ENCODE measurements at regions of chr13 and their contacts with region 1.

Region 1: GRCh38 chr13:100573121-100573520 is 15.5 kb downstream of the GGACT start:
- DNase-seq: peak; percentile 78
- H3K4me3 ChIP-seq: no peak overlapping the region
- H3K27ac ChIP-seq: no peak overlapping the region
- H3K4me1 ChIP-seq: no peaks in the 10 kb centered on the region
- H3K27me3 ChIP-seq: no peaks in the 10 kb centered on the region
- CTCF ChIP-seq: peak; percentile 60 to 76 (median 68)
- EP300 ChIP-seq: no peak
- POLR2A ChIP-seq: no peak

Region 2: GRCh38 chr13:100356889-100357288 is 216.2 kb before region 1 on chr13:
- in situ Hi-C with region 1: no loop called
- intact Hi-C with region 1: no loop called
- DNase-seq: no peak
- H3K4me3 ChIP-seq: no peak overlapping the region
- H3K27ac ChIP-seq: no peak overlapping the region
- H3K4me1 ChIP-seq: no peaks in the 10 kb centered on the region
- H3K27me3 ChIP-seq: no peaks in the 10 kb centered on the region
- CTCF ChIP-seq: no peak
- EP300 ChIP-seq: no peak
- POLR2A ChIP-seq: no peak

Region 3: DNA sequence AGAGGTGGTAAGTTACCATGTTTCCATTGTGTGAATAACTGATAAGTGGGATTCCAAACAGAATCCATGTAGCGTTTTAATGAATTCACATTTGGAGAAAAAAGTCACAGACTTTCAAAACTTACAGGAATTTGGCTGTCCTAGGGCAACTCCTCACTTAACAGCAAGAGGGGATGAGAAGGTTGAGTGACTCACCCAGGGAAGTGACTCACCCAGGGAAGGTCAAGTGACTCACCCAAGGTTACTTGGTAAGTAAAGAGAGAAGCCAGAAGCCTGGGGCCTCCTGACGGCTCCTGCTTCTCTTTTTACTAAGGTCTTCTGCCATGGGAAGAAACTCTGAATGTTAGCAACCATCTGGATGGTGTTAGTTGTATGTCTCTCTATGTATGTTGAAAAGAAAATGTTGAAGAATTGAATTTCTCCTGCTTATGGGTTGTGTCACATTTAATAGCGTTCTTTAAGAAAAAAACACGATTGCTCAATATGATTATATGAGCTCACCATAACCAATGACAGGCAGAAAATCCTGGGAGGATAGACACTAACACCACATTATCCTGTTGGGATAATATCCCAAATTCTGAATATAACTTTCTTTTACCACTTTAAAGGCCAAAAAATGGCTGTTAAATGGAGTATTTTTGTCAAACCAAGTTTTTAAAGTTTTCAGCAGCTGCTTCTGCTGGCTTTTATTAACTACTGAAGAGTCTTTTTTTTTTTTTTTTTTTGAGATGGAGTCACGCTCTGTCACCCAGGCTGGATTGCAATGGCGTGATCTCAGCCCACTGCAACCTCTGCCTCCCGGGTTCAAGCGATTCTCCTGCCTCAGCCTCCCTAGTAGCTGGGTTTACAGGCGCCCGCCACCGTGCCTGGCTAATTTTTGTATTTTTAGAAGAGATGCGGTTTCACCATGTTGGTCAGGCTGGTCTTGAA is 180.1 kb before region 1 on chr13:
- in situ Hi-C with region 1: no loop called
- intact Hi-C with region 1: no loop called
- DNase-seq: peak; percentile 75
- H3K4me3 ChIP-seq: no peak overlapping the region
- H3K27ac ChIP-seq: peak overlapping the region; percentile 46 to 65 (median 58)
- H3K4me1 ChIP-seq: peaks cover 0 to 35% (median 0%) of the 10 kb centered on the region in 4 donors
- H3K27me3 ChIP-seq: no peaks in the 10 kb centered on the region
- CTCF ChIP-seq: no peak
- EP300 ChIP-seq: no peak
- POLR2A ChIP-seq: no peak

Region 4: GRCh38 chr13:100650326-100650725 is 77.2 kb after region 1 on chr13:
- in situ Hi-C with region 1: no loop called
- intact Hi-C with region 1: no loop called
- DNase-seq: no peak
- H3K4me3 ChIP-seq: no peak overlapping the region
- H3K27ac ChIP-seq: no peak overlapping the region
- H3K4me1 ChIP-seq: no peaks in the 10 kb centered on the region
- H3K27me3 ChIP-seq: no peaks in the 10 kb centered on the region
- CTCF ChIP-seq: no peak
- EP300 ChIP-seq: no peak
- POLR2A ChIP-seq: no peak

Region 5: DNA sequence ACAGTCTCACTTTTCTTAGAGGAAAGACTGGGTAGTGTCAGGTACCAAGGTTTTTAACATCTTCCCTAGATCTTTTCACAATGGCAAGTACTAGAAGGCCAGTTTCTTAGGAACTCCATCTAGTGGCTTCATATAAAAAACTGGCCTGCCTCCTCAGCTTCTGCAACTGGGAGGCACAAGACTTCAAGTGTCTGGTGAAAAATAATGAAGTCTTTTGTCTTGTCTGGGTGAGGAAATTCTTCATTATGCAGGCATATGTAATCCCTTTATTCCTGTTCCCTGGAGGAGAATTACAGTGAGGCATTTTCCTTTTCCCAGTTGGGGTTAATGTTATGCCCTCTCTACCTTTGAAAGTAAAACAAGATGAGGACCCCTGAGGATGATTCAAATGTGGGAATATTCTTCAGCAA is 542.6 kb after region 1 on chr13:
- in situ Hi-C with region 1: loop called in 1 of 4 experiments (anchors 25 kb)
- intact Hi-C with region 1: no loop called
- DNase-seq: no peak
- H3K4me3 ChIP-seq: no peak overlapping the region
- H3K27ac ChIP-seq: no peak overlapping the region
- H3K4me1 ChIP-seq: no peaks in the 10 kb centered on the region
- H3K27me3 ChIP-seq: peaks cover 3% of the 10 kb centered on the region
- CTCF ChIP-seq: no peak
- EP300 ChIP-seq: no peak
- POLR2A ChIP-seq: no peak

Region 6: GRCh38 chr13:101170306-101170705 is 597.2 kb after region 1 on chr13:
- in situ Hi-C with region 1: no loop called
- intact Hi-C with region 1: no loop called
- DNase-seq: no peak
- H3K4me3 ChIP-seq: no peak overlapping the region
- H3K27ac ChIP-seq: no peak overlapping the region
- H3K4me1 ChIP-seq: no peaks in the 10 kb centered on the region
- H3K27me3 ChIP-seq: no peaks in the 10 kb centered on the region
- CTCF ChIP-seq: no peak
- EP300 ChIP-seq: no peak
- POLR2A ChIP-seq: no peak